ENCODE measurements at regions of chr2 and their contacts with region 1.

Region 1: DNA sequence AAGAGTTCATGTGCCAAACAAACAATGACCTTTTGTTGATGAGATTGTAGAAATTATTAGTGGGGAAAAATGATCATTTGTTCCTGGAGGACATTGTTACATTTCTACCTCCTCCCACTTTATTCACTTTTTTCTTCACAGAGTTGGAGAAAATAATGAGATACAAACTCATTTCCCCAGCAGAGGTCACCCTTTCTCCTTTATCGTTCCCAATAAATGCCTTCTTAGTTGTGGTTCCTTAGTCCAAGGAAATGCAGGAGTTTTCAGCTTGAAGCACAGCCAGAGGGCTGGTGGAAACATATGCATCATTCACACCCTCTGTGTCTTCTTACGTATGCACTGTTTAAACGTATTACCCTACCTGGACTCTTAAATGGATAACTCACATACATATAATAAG is 108.8 kb downstream of the SLC4A3 start:
- DNase-seq: no peak
- H3K4me3 ChIP-seq: no peak overlapping the region
- CTCF ChIP-seq: peak; percentile 39

Region 2: DNA sequence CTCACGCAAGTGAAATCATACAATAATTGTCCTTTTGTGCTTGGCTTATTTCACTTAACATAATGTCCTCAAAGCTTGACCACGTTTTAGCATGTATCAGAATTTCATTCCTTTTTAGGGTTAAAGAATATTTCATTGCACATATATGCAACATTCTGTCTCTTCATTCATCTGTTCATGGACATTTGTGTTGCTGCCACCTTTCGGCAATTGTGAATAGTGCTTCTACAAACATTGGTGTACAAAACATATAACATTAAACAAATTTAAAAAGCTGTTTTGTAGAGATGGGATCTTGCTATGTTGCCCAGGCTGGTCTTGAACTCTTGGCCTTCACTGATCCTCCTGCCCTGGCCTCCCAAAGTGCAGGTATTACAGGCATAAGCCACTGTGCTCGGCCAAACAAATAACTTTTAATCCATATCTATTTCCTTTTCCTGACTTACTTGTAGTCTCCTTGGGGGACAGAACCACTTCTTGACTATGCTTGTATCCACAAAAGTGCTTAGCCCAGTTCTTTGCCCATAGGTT is 100.5 kb after region 1 on chr2:
- CTCF ChIA-PET with region 1: interaction called, 42 read pairs
- POLR2A ChIA-PET with region 1: no interaction called
- DNase-seq: no peak
- H3K4me3 ChIP-seq: no peak overlapping the region
- CTCF ChIP-seq: peak; percentile 27

Region 3: DNA sequence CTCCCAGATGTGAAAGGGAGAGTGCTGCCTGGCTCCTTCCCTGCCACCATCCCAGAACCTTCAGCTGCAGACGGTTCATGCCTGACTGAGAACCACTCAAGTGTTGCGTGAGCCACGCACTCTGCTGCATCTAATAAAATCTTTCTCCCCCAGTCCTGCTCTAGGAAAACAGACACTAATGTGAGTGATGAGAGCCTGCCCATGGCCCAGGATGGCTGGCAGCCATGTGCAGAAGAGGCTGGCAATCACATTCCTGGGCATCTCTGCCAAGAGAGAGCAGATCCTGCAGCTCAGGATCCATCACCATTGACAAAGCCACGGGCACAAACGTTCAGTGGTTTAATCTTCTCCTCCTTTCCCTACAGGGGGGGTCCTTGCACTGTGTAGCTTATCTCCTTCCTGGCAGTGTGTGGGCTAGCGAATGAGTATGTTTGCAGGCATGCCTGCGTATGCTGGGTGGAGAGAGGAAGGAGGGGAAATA is 368.7 kb after region 1 on chr2:
- CTCF ChIA-PET with region 1: interaction called, 18 read pairs
- POLR2A ChIA-PET with region 1: no interaction called
- DNase-seq: peak; percentile 64
- H3K4me3 ChIP-seq: no peak overlapping the region
- CTCF ChIP-seq: peak; percentile 69

Region 4: GRCh38 chr2:221573430-221574230 is 1837.4 kb after region 1 on chr2:
- CTCF ChIA-PET with region 1: interaction called, 62 read pairs
- POLR2A ChIA-PET with region 1: no interaction called
- DNase-seq: no peak
- H3K4me3 ChIP-seq: peak overlapping the region; percentile 87
- CTCF ChIP-seq: peak; percentile 99